Common myeloid progenitor, CD34-positive (primary cell): ENCODE measurements at regions of chr19 and their contacts with region 1.

Region 1: DNA sequence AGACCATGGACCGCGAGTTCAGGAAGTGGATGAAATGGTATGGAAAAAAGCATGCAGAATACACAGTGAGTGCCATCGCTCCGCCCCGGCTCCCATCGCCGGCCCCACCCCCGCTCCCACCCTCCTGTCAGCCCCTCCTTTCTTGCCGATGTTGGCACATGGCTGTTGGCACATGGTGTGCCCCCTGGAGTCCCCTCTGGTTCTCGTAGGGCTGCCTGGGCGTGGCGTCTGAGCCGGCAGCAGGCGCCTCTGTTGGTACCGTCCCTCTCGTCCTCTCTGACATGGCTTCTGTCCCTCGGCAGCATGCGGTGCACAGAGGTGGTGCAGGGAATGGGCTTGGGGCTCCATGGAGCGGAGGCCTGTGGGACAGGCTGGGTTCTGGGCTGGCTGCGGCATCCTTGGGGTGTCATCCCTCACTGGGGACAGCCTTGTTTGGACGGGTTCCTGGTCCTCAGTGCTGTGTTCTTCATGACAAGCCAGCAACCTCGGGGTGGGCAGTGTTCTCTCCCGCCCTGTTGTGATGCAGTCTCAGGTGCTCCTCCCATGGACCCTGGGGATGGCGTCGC is 30.9 kb downstream of the DOT1L start:
- DNase-seq: no peak
- H3K4me3 ChIP-seq: no peak overlapping the region
- H3K27ac ChIP-seq: no peak overlapping the region
- H3K4me1 ChIP-seq: no peaks in the 10 kb centered on the region
- H3K27me3 ChIP-seq: no peaks in the 10 kb centered on the region

Region 2: DNA sequence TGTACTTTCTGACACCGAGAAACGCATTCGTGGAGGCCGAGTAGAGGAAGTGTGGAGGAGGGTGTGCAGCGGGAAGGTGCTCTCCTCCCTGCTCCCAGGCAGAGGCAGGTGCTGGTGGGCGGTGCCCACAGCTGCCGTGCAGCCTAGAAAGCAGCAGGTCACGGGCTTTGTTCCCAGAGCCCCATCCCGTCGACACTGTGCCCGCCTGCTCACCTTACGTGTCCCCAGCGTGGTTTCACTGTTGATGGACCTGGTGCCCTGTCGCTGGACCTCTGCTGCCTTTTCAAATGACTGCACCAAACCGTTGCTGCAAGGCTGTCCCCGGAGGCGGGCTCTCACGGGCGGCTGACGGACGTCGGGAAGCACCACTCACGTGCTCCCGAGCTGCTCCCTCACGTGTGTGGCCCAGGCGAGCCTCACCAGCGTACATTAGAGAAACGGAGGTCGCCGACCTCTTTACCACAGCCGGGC is 20.7 kb after region 1 on chr19:
- CTCF ChIA-PET with region 1: interaction called, 10 read pairs
- POLR2A ChIA-PET with region 1: no interaction called
- DNase-seq: no peak
- H3K4me3 ChIP-seq: no peak overlapping the region
- H3K27ac ChIP-seq: no peak overlapping the region
- H3K4me1 ChIP-seq: no peaks in the 10 kb centered on the region
- H3K27me3 ChIP-seq: no peaks in the 10 kb centered on the region

Region 3: DNA sequence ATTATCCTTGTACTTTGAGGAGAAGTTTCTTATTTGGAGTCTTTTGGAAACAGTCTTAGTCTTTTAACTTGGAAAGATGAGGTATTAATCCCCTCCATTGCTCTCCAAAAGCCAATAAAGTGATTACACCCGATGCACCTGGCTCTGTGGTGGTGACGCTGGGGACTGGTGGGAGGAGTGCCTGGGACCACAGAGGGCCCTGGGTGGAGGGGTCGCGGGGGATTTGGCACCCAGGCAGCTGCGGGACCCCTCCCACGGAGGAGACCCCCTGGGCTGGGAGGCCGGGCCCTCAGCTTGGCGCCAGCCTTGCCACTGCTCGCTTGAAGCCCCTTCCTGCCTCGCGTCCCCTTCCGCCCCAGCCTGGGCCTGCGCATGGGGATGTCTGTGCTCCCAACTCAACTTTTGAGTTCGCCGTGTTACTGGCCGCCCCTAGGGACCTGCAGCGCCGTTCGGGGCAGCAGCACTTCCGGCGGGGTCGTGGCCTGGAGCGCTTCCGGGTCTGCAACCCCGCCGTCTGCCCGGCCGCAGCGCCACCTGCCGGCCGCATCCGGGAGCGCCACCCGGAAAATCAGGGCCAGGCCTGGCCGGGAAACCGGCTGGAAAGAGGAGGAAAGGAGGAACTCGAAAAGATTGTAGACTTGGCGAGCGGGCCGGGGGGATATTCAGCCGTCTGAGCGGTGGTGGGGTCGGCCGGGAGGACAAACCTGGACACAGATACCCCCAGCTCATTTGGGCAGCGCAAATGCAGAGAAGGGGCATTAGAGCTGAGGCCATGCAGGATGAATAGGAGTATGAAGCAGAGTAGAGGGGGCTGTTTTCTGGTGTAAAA is 79.0 kb after region 1 on chr19:
- CTCF ChIA-PET with region 1: no interaction called
- POLR2A ChIA-PET with region 1: no interaction called
- DNase-seq: peak; percentile 77 to 82 (median 78)
- H3K4me3 ChIP-seq: peak overlapping the region in 4 of 7 experiments; percentile 28 to 54 (median 44)
- H3K27ac ChIP-seq: peak overlapping the region in 1 of 2 experiments; percentile 58
- H3K4me1 ChIP-seq: peaks cover 5 to 44% (median 40%) of the 10 kb centered on the region in 4 experiments
- H3K27me3 ChIP-seq: no peaks in the 10 kb centered on the region